ENCODE measurements at regions of chr1 and their contacts with region 1.

Region 1: GRCh38 chr1:116390195-116390594 is 17.2 kb downstream of the ATP1A1 start:
- DNase-seq: peak; percentile 75
- H3K4me3 Mint-ChIP-seq: no peak overlapping the region
- H3K27ac Mint-ChIP-seq: peak overlapping the region; percentile 50
- H3K4me1 Mint-ChIP-seq: peaks cover 63% of the 10 kb centered on the region
- H3K27me3 Mint-ChIP-seq: no peaks in the 10 kb centered on the region

Region 2: GRCh38 chr1:116325922-116326321 is 64.3 kb before region 1 on chr1:
- CTCF ChIA-PET with region 1: no interaction called
- POLR2A ChIA-PET with region 1: no interaction called
- DNase-seq: peak; percentile 51
- H3K4me3 Mint-ChIP-seq: peak overlapping the region; percentile 25
- H3K27ac Mint-ChIP-seq: peak overlapping the region; percentile 94
- H3K4me1 Mint-ChIP-seq: peaks cover 39% of the 10 kb centered on the region
- H3K27me3 Mint-ChIP-seq: no peaks in the 10 kb centered on the region

Region 3: DNA sequence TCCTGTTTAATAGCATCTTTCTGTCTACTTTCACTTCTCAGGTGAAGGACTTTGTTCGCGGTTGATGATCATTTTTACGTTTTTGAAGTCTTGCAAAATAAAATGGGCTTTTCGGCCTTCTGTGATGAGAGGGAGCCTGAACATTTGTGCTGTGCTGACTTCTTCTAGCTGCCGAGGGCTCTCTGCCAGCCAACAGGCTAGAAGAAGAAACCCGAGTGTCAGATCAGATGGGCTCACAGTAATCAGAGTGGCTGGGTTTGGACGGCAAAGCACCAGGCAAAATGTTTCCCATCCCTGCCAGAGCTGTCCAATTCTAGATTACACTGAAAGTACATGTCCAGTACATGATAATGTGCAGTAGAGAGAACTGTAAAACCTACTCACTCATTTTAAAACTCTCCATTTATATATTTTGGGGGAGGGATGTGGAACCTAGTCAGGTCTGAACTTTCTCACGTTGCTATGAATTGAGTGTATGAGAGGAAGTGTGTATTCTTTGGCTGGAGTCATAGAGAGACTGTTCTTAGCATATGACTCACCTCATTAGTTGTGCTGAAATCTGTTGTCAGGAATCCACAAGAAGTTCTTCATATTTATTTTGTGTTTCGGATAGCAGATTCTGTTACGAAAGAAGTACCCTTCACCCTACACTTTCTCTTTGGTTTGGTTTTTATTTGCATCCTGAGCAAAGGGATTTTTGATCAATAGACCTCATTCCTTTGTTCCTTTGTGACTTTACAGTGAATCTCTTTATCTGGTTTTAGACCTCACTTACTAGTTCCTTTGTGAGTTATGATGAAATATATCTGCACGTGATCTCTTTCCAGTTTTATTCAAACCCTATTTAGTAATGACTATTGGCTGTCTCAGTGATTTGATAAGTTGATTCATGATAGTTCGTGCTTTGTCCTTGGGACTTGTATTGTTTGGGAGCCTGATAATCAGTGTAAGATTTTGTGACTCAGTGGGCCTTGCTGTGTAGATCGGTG is 12.4 kb before region 1 on chr1:
- CTCF ChIA-PET with region 1: interaction called, 17 read pairs
- POLR2A ChIA-PET with region 1: interaction called, 34 read pairs
- DNase-seq: peak; percentile 49
- H3K4me3 Mint-ChIP-seq: peak overlapping the region; percentile 77
- H3K27ac Mint-ChIP-seq: peak overlapping the region; percentile 83
- H3K4me1 Mint-ChIP-seq: peaks cover 75% of the 10 kb centered on the region
- H3K27me3 Mint-ChIP-seq: no peaks in the 10 kb centered on the region

Region 4: GRCh38 chr1:116457946-116458604 is 67.9 kb after region 1 on chr1:
- CTCF ChIA-PET with region 1: no interaction called
- POLR2A ChIA-PET with region 1: no interaction called
- DNase-seq: no peak
- H3K4me3 Mint-ChIP-seq: no peak overlapping the region
- H3K27ac Mint-ChIP-seq: no peak overlapping the region
- H3K4me1 Mint-ChIP-seq: no peaks in the 10 kb centered on the region
- H3K27me3 Mint-ChIP-seq: peaks cover 3% of the 10 kb centered on the region

Region 5: GRCh38 chr1:116472431-116472961 is 82.3 kb after region 1 on chr1:
- CTCF ChIA-PET with region 1: no interaction called
- POLR2A ChIA-PET with region 1: no interaction called
- DNase-seq: no peak
- H3K4me3 Mint-ChIP-seq: no peak overlapping the region
- H3K27ac Mint-ChIP-seq: no peak overlapping the region
- H3K4me1 Mint-ChIP-seq: no peaks in the 10 kb centered on the region
- H3K27me3 Mint-ChIP-seq: no peaks in the 10 kb centered on the region

Measured in activated CD4-positive, alpha-beta memory T cell treated with anti-CD3 and anti-CD28 coated beads, Interleukin-2, amount 10 ng/mL, durations not matched to agents 7 days and 5 days (primary cell).